Gastrocnemius medialis (tissue), 4 donors: ENCODE measurements at regions of chr6 and their contacts with region 1.

Region 1: DNA sequence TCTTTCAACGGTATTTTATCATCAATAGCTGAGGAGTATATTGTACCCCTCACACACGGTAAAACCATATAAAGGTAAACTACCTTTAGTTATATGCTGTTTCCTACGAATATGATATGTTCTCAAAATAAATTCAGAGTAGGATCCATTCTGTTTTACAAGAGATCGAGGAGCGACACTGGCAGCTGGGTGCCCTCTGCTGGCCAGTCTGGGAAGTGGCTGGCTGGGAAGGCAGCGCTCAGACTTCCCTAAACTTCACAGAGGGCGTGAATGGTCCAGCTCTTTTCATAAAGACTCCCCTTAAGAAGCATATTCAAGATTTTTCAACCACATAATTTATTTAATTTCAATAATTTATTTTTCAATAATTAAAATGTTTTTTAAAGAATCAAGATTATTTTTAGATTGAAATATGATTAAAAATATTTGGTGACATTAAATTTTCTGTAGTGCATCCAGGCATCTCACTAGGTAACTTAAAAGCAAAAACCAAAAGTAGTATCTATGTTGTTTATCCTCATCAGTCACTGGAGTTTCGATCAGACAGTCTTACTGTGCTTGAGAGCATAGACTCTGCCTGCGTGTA is 187.5 kb upstream of the PDE10A start:
- DNase-seq: peak in 1 of 2 donors; percentile 32
- ATAC-seq: peak in 1 of 2 donors; percentile 47
- H3K4me3 ChIP-seq: peak overlapping the region in 1 of 4 donors; percentile 20
- H3K27ac ChIP-seq: no peak overlapping the region
- H3K4me1 ChIP-seq: no peaks in the 10 kb centered on the region
- H3K27me3 ChIP-seq: peaks cover 14 to 17% (median 14%) of the 10 kb centered on the region in 3 donors
- CTCF ChIP-seq: peak; percentile 56 to 91 (median 73)
- POLR2A ChIP-seq: no peak

Region 2: GRCh38 chr6:165729307-165729936 is 121.1 kb before region 1 on chr6:
- in situ Hi-C with region 1: loop called in 1 of 4 experiments (anchors 10 kb)
- intact Hi-C with region 1: loop called (anchors 5 kb)
- DNase-seq: no peak
- ATAC-seq: no peak
- H3K4me3 ChIP-seq: no peak overlapping the region
- H3K27ac ChIP-seq: no peak overlapping the region
- H3K4me1 ChIP-seq: no peaks in the 10 kb centered on the region
- H3K27me3 ChIP-seq: no peaks in the 10 kb centered on the region
- CTCF ChIP-seq: peak; percentile 33 to 71 (median 46)
- POLR2A ChIP-seq: no peak

Region 3: DNA sequence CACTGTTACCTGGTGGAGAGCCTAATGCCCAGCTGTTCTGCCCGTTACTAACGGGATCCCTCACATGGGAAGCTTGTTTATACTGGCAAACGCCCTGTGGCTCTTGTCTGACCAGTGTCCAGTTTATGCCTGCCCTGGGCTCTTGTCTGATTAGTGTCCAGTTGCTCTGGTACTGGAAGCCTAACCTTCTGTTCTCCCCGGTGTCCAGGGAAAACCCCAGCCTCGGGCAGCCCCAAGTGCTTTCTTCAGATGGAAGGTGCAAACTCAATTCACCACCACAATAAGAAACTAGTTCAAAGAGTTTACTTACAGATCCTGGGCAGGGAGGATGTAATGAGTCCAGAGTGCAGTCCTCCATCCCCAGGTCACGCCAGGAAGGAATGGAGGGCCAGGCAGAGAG is 168.7 kb after region 1 on chr6:
- in situ Hi-C with region 1: no loop called
- intact Hi-C with region 1: no loop called
- DNase-seq: no peak
- ATAC-seq: no peak
- H3K4me3 ChIP-seq: no peak overlapping the region
- H3K27ac ChIP-seq: no peak overlapping the region
- H3K4me1 ChIP-seq: no peaks in the 10 kb centered on the region
- H3K27me3 ChIP-seq: peaks cover 0 to 2% (median 0%) of the 10 kb centered on the region in 3 donors
- CTCF ChIP-seq: no peak
- POLR2A ChIP-seq: no peak